Activated T-helper 2 cell treated with anti-CD3 and anti-CD28 coated beads, Interferon-gamma antibody, Interleukin-2, Interleukin-4, amounts not matched to agents 10 μg/mL and 5 μg/mL and 100 μg/mL, durations not matched to agents 14 hours and 24 hours and 36 hours (primary cell): ENCODE measurements at regions of chr5 and their contacts with region 1.

Region 1: DNA sequence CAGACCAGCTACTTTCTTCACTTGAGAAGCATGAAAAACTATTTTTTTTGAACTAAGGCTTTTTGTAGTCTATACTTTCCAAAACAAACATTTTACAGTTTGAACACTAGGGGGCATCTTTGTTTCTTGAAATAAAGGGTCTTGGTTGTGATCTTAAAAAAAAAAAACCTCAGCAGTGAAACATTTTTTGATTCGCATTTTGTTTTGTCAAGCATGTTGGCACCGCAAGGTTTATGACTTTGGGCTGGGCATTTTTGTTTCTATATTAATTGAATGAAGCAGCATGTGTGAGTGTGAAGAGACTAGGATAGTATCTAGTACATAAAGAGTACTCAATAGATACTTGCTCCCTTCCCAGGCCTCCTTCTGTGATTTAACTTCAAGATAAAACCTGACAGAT is 31.6 kb upstream of the ACOT12 start:
- DNase-seq: no peak
- H3K4me3 Mint-ChIP-seq: no peak overlapping the region
- H3K27ac Mint-ChIP-seq: no peak overlapping the region
- H3K4me1 Mint-ChIP-seq: peaks cover 35% of the 10 kb centered on the region
- H3K27me3 Mint-ChIP-seq: no peaks in the 10 kb centered on the region

Region 2: DNA sequence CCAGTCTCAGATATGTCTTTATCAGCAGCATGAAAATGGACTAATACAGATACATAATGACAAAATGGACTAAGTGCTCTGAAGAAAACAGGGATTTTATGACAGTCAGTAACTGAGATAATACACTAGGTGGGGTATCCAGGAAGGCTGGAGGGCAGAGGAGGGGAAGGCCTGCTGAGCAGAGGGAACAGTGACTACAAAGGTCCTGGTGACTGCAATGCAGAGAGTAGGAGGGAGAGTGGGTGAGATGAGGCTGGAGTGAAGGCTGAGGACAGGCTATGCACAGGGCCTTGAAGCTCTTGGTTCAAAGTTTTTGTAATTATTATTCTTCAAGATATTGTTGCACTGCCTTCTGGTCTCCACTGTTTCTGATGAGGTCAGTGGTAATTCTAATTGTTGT is 36.5 kb before region 1 on chr5:
- intact Hi-C with region 1: no loop called
- DNase-seq: no peak
- H3K4me3 Mint-ChIP-seq: no peak overlapping the region
- H3K27ac Mint-ChIP-seq: no peak overlapping the region
- H3K4me1 Mint-ChIP-seq: peaks cover 3% of the 10 kb centered on the region
- H3K27me3 Mint-ChIP-seq: peaks cover 26% of the 10 kb centered on the region

Region 3: DNA sequence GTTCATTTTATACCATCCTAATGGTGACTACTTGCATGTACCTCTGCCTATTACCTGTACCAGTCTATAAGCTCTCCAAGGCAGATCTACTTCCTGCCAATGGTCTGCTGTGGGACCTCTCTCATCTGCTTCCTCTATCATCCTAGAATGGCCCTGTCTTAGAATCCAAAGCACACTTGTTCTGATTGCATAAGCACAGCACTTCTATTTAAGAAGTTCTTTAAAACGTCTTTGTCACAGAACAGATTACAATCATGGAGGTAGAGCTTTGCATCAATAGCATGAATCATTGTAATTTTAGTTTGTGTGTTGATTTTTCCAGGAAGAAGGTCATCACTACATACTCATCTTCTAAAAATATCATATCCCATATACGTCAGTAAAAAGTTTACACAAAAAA is 100.1 kb after region 1 on chr5:
- intact Hi-C with region 1: no loop called
- DNase-seq: no peak
- H3K4me3 Mint-ChIP-seq: no peak overlapping the region
- H3K27ac Mint-ChIP-seq: peak overlapping the region; percentile 79
- H3K4me1 Mint-ChIP-seq: peaks cover 27% of the 10 kb centered on the region
- H3K27me3 Mint-ChIP-seq: no peaks in the 10 kb centered on the region

Region 4: DNA sequence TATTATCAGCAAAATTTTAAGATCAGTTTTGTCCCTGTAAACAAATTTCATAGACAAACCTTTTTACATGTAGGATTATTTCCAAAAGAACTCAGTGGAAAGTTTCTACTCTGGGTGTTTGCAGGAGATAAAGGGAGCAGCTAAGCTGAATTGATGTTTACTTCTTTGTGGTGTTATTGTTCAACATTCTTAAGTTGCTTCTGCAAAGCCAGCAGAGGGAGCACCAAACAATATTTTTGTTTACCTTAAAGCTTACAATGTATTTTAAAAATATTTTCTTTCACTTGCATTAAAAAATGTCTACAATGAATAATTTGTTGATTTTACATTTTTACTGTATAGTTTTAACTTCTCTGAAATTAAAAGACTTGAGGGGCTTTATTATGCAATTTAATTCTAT is 681.7 kb after region 1 on chr5:
- intact Hi-C with region 1: loop called (anchors 10 kb)
- DNase-seq: no peak
- H3K4me3 Mint-ChIP-seq: no peak overlapping the region
- H3K27ac Mint-ChIP-seq: no peak overlapping the region
- H3K4me1 Mint-ChIP-seq: peaks cover 22% of the 10 kb centered on the region
- H3K27me3 Mint-ChIP-seq: no peaks in the 10 kb centered on the region